HEK293 (cell line): ENCODE measurements at regions of chr6 and their contacts with region 1.

Region 1: DNA sequence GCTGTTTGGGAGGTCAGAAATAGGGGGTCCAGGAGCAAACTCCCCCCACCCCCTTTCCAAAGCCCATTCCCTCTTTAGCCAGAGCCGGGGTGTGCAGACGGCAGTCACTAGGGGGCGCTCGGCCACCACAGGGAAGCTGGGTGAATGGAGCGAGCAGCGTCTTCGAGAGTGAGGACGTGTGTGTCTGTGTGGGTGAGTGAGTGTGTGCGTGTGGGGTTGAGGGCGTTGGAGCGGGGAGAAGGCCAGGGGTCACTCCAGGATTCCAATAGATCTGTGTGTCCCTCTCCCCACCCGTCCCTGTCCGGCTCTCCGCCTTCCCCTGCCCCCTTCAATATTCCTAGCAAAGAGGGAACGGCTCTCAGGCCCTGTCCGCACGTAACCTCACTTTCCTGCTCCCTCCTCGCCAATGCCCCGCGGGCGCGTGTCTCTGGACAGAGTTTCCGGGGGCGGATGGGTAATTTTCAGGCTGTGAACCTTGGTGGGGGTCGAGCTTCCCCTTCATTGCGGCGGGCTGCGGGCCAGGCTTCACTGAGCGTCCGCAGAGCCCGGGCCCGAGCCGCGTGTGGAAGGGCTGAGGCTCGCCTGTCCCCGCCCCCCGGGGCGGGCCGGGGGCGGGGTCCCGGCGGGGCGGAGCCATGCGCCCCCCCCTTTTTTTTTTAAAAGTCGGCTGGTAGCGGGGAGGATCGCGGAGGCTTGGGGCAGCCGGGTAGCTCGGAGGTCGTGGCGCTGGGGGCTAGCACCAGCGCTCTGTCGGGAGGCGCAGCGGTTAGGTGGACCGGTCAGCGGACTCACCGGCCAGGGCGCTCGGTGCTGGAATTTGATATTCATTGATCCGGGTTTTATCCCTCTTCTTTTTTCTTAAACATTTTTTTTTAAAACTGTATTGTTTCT is at the start of gene VEGFA:
- H3K4me3 ChIP-seq: peak within 1 kb of the TSS; percentile 84
- H3K27ac ChIP-seq: peak within 1 kb of the TSS; percentile 82
- H3K4me1 ChIP-seq: no peaks in the 10 kb centered on the region; the same call in 1 of the 2 replicates
- CTCF ChIP-seq: peak; percentile 98

Region 2: DNA sequence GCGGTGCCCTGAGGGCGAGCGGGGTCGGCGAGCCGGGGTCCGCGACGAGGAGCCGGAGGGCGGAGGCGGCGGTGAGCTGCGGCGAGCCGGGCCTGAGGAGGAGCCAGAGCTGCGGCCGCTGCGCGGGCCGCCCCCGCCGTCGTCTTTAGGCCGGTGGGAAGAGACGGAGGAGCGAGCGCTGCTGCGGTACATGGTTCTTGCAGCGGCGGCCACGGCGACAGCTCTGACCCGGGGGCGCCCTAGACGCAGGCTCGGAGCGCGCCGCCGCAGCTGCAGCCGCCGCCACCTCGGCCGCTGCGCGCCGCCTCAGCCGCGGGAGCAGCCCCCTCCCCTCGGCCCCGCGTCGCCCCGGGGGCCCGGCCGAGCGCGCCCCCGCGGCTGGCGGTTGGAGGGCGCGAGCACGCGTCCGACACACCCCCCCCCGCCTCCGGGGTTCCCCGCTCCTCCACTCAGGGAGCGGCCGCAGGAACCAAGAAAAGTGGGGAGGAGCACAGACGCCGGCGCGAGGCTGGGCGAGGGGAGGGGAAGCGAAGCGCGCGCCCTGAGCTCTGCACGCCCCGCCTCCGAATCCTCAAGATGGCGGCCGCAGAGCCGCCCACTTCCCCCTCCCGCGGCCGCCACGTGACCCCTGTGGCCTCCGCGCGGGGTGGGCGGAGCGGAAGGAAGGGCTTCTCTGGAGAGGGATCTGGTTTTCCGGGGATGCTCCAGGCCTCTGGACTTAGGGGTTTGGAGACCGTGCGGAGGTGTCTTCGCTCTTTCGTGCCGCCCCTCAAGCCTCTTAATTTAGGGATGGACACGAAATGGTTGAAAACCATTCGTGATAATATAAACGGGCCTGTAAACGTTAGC is 400.4 kb before region 1 on chr6 and contains the start of gene ZNF318:
- CTCF ChIA-PET with region 1: no interaction called
- POLR2A ChIA-PET with region 1: no interaction called
- H3K4me3 ChIP-seq: peak within 1 kb of the TSS; percentile 77
- H3K27ac ChIP-seq: peak within 1 kb of the TSS; percentile 93
- H3K4me1 ChIP-seq: peaks cover 7% of the 10 kb centered on the region
- CTCF ChIP-seq: no peak

Region 3: GRCh38 chr6:43608310-43608763 is 161.4 kb before region 1 on chr6:
- CTCF ChIA-PET with region 1: interaction called, 12 read pairs
- POLR2A ChIA-PET with region 1: interaction called, 3 read pairs
- H3K4me3 ChIP-seq: no peak overlapping the region
- H3K27ac ChIP-seq: no peak overlapping the region
- H3K4me1 ChIP-seq: no peaks in the 10 kb centered on the region
- CTCF ChIP-seq: peak; percentile 83

Region 4: GRCh38 chr6:43687437-43688347 is 82.1 kb before region 1 on chr6 and contains the start of gene MRPS18A:
- CTCF ChIA-PET with region 1: interaction called, 16 read pairs
- POLR2A ChIA-PET with region 1: interaction called, 4 read pairs
- H3K4me3 ChIP-seq: peak within 1 kb of the TSS; percentile 91
- H3K27ac ChIP-seq: peak within 1 kb of the TSS; percentile 56
- H3K4me1 ChIP-seq: peaks cover 24% of the 10 kb centered on the region
- CTCF ChIP-seq: no peak

Region 5: GRCh38 chr6:43758617-43759050 is 11.1 kb before region 1 on chr6:
- CTCF ChIA-PET with region 1: interaction called, 110 read pairs
- POLR2A ChIA-PET with region 1: interaction called, 15 read pairs
- H3K4me3 ChIP-seq: no peak overlapping the region
- H3K27ac ChIP-seq: no peak overlapping the region
- H3K4me1 ChIP-seq: no peaks in the 10 kb centered on the region; the same call in 1 of the 2 replicates
- CTCF ChIP-seq: peak; percentile 30; the same call in 1 of the 2 replicates

Region 6: DNA sequence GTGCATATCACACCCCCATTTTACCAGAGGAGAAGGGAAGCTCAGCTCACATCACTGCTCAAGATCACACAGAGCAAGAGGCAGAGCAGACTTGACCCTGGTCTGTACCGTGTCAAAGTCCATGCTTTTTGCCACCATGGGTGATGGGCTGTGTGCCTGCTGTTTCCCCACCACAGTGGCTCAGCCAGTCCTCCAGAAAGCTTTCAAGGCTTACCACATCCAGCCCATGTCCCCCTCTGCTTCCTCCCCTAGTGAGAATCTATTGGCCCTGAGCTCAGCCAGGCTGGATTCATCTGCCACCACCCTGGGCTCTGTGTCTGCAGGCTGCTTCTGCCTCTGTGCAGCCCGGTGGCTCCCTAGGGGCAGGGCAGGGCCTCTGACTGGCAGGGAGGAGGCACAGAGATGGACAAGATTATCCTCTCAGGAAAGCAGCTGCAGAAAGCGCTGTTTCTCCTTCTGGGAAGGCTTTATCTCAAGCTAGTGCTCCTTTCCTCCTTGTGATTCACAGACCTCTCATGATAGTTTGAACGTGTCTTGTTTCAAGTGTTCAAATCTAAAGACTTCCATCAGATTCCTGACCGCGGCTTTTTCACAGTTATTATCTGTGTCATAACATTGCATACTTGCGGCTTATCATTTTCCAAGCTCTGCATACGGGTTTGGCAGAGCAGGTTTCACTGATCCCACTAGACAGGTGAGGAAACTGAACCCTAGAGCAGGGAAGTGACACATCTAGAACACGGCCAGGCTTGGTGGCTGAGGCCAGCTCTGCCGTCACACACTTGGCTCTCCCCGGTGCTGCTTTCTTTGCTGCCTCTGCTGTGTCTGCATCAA is 37.7 kb after region 1 on chr6:
- CTCF ChIA-PET with region 1: interaction called, 18 read pairs
- POLR2A ChIA-PET with region 1: interaction called, 5 read pairs
- H3K4me3 ChIP-seq: no peak overlapping the region
- H3K27ac ChIP-seq: no peak overlapping the region
- H3K4me1 ChIP-seq: peaks cover 14% of the 10 kb centered on the region
- CTCF ChIP-seq: no peak

Region 7: DNA sequence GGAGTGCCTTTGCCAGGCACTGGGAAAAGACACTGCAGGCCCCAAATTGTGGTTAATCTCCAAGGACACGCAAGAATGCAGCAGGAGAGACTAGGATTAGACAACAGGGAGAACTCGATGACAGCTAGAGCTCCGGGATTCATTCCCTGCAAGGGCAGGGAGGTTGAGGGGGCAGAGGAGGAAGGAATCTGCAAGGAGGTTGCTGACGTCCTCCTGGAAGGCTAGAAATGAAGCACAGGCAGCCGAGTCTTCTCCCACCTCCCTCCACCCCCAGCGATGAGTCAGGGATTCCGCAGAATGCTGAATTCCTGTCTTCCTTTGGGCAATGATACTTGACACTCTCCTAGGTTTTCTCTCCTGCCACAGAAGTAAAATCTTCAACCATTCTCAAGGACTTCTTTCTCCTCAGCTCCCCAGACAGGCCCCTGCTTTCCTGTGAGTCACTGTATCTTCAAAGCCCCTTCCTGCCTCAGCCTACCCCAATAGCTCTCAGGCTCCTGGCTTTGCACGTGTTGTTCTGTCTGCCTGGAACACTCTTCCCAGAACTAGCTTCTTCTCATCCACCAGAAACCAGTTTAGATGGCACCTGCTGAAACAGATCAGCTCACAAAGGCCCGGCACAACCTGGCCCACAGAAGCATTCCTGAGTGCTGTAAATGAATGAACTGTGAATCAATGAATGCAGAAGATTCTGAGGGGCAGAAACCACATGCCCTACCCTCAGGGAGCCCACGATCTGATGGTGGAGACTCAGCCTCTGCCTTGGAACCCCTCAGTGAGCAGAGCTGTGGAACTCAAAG is 271.9 kb after region 1 on chr6:
- CTCF ChIA-PET with region 1: interaction called, 5 read pairs
- POLR2A ChIA-PET with region 1: interaction called, 10 read pairs
- H3K4me3 ChIP-seq: no peak overlapping the region
- H3K27ac ChIP-seq: no peak overlapping the region; the same call in 1 of the 2 replicates
- H3K4me1 ChIP-seq: peaks cover 7% of the 10 kb centered on the region; the same call in 1 of the 2 replicates
- CTCF ChIP-seq: no peak

Region 8: DNA sequence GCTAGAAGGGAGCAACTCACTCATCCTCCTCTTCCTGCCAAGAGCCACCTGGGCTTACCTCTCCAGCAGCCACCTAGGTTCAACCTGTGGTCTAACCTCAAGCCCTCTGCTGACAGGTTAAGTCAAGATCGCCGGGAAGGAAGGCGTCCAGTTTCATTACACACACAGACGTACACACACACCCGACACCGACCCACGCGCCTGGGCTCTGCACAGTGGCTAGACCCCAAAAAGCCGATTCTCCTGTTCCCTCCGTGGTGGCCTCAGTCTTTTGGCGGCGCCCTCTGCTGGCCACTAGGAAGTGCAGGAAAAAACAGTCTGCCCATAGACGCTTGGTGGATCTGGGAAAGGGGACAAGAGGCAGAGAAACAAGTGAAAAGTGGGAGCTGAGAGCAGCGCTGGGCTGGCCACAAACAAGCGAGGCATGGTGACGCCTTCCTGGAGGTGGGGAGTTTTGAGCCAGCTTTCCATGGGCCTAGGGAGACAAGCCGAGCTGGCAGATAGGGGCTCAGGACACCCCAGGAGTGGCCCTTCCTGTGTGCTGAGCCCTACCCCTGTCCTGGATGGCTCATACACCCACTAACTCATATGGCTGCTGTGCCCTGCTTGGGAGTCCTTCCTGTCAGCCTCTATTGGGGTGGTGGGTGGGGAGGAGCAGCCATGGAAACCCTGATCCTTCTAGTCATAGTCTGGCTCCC is 304.8 kb after region 1 on chr6:
- CTCF ChIA-PET with region 1: interaction called, 189 read pairs
- POLR2A ChIA-PET with region 1: interaction called, 36 read pairs
- H3K4me3 ChIP-seq: no peak overlapping the region
- H3K27ac ChIP-seq: peak overlapping the region; percentile 19; the same call in 1 of the 2 replicates
- H3K4me1 ChIP-seq: 0 out of 2 replicates have a peak, but pooled peaks cover 3% of the 10 kb centered on the region
- CTCF ChIP-seq: peak; percentile 94